ENCODE measurements at regions of chr17 and their contacts with region 1.

Region 1: DNA sequence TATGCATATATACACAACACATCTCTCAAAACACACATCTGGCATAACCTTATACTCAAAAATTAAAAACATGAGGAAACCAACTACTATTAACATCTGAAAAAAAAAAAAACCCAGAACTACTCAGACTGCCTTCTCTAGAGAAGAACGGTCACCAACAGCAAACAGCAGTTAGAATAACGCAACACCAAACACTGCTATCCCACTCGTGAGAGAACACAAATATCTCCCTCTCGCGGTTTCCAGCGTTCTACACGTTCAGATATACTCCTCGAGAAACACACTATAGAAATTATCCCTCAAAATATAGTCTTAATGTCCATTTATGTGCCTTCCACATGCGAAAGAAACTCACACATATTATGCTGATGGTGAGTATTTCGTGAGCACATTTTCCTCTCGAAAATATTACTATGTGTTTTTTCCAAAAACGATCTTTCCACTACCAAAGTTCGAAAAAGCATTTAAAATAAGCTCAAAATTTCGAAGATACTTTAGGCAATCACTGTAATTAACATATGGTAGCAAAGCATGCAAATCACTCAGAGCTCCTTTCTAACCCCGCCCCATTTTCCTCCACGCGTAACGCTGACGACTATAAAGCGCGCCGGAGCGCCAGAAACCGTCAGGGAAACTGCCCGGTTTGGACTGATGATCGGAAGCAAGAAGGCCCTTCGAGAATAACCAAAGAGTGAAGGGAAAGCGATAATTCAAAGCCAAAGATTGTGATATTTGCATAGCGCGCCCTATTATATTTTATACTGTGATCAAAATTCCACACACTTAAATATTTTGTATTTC is 60.1 kb downstream of the TEX14 start:
- DNase-seq: peak; percentile 96
- ATAC-seq: peak; percentile 97
- H3K4me3 Mint-ChIP-seq: no peak overlapping the region
- H3K27ac Mint-ChIP-seq: no peak overlapping the region
- H3K4me1 Mint-ChIP-seq: peaks cover 3% of the 10 kb centered on the region
- H3K27me3 Mint-ChIP-seq: no peaks in the 10 kb centered on the region

Region 2: DNA sequence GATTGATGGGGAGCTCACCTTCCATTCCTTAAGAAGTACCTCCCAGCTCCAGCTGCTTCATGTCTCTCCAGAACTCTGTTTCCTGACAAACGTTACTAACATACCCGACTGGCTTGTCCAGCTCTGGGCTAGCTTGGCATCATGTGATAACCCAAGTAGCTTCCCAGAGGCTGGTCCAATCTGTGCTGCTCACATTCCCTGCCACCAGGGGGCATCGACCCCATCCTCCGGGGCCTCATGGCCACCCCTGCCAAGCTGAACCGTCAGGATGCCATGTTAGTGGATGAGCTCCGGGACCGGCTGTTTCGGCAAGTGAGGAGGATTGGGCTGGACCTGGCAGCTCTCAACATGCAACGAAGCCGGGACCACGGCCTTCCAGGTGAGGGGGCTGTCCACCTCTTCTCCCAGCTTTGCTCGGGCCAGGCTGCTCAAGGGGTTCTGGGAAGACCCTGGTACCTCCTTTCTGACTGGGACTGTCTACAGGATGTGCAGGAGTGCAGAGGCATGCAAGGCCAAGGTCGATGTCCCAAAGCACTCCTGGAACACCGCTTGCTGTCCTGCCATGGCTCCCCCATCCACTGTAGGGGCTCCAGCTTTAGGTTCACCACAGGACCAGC is 431.6 kb before region 1 on chr17:
- CTCF ChIA-PET with region 1: no interaction called
- POLR2A ChIA-PET with region 1: no interaction called
- intact Hi-C with region 1: no loop called
- DNase-seq: peak; percentile 79
- ATAC-seq: peak; percentile 95
- H3K4me3 Mint-ChIP-seq: no peak overlapping the region
- H3K27ac Mint-ChIP-seq: no peak overlapping the region
- H3K4me1 Mint-ChIP-seq: no peaks in the 10 kb centered on the region
- H3K27me3 Mint-ChIP-seq: no peaks in the 10 kb centered on the region

Region 3: GRCh38 chr17:58352014-58352842 is 279.5 kb before region 1 on chr17 and contains the start of gene SUPT4H1:
- CTCF ChIA-PET with region 1: no interaction called
- POLR2A ChIA-PET with region 1: interaction called, 14 read pairs
- intact Hi-C with region 1: no loop called
- DNase-seq: peak; percentile 96
- ATAC-seq: peak; percentile 78
- H3K4me3 Mint-ChIP-seq: peak within 1 kb of the TSS; percentile 97
- H3K27ac Mint-ChIP-seq: peak within 1 kb of the TSS; percentile 98
- H3K4me1 Mint-ChIP-seq: peaks cover 38% of the 10 kb centered on the region
- H3K27me3 Mint-ChIP-seq: no peaks in the 10 kb centered on the region
- total RNA-seq, gene SUPT4H1: 106 to 129 TPM

Region 4: GRCh38 chr17:58605470-58605869 is 26.3 kb before region 1 on chr17:
- CTCF ChIA-PET with region 1: no interaction called
- POLR2A ChIA-PET with region 1: interaction called, 13 read pairs
- intact Hi-C with region 1: no loop called
- DNase-seq: peak; percentile 35
- ATAC-seq: peak; percentile 89
- H3K4me3 Mint-ChIP-seq: no peak overlapping the region
- H3K27ac Mint-ChIP-seq: no peak overlapping the region
- H3K4me1 Mint-ChIP-seq: peaks cover 8% of the 10 kb centered on the region
- H3K27me3 Mint-ChIP-seq: no peaks in the 10 kb centered on the region

Region 5: DNA sequence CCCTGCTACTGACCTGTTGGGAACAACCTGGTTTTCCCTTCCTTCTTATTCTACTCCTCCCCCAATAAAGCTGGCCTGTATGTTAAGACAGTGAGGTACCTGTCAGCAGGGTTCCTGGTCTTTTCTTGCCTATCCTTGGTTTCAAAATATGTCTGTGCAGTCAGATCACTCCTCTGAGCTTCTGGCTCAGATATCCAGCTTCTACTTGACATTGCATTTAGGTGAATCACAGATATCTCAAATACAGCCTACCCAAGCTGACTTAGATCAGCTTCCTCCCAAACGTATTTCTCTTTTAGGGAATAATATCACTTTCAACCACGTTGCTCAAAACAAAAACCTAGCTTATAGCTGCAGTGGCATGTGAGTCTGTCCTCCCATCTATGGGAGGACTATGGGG is 11.4 kb after region 1 on chr17:
- CTCF ChIA-PET with region 1: interaction called, 7 read pairs
- POLR2A ChIA-PET with region 1: interaction called, 23 read pairs
- intact Hi-C with region 1: no loop called
- DNase-seq: no peak
- ATAC-seq: peak; percentile 69
- H3K4me3 Mint-ChIP-seq: no peak overlapping the region
- H3K27ac Mint-ChIP-seq: no peak overlapping the region
- H3K4me1 Mint-ChIP-seq: no peaks in the 10 kb centered on the region
- H3K27me3 Mint-ChIP-seq: no peaks in the 10 kb centered on the region

Region 6: GRCh38 chr17:58666858-58667619 is 35.3 kb after region 1 on chr17:
- CTCF ChIA-PET with region 1: no interaction called
- POLR2A ChIA-PET with region 1: interaction called, 10 read pairs
- intact Hi-C with region 1: no loop called
- DNase-seq: peak; percentile 70
- ATAC-seq: peak; percentile 61
- H3K4me3 Mint-ChIP-seq: peak overlapping the region; percentile 36
- H3K27ac Mint-ChIP-seq: no peak overlapping the region
- H3K4me1 Mint-ChIP-seq: peaks cover 9% of the 10 kb centered on the region
- H3K27me3 Mint-ChIP-seq: peaks cover 2% of the 10 kb centered on the region

Region 7: GRCh38 chr17:59106463-59107305 is 475.0 kb after region 1 on chr17 and contains the start of gene TRIM37:
- CTCF ChIA-PET with region 1: no interaction called
- POLR2A ChIA-PET with region 1: interaction called, 12 read pairs
- intact Hi-C with region 1: loop called in 1 of 2 experiments (anchors 2 kb)
- DNase-seq: peak; percentile 99
- ATAC-seq: peak; percentile 95
- H3K4me3 Mint-ChIP-seq: peak within 1 kb of the TSS; percentile 85
- H3K27ac Mint-ChIP-seq: peak within 1 kb of the TSS; percentile 92
- H3K4me1 Mint-ChIP-seq: peaks cover 49% of the 10 kb centered on the region
- H3K27me3 Mint-ChIP-seq: no peaks in the 10 kb centered on the region
- total RNA-seq, gene TRIM37: 21.3 to 22.7 TPM